ENCODE measurements at regions of chr15 and their contacts with region 1.

Region 1: GRCh38 chr15:60507596-60508424 is 28.9 kb upstream of the ICE2 start:
- DNase-seq: peak in 8 of 9 experiments; percentile 18 to 89 (median 52)
- ATAC-seq: peak; percentile 83
- H3K4me3 ChIP-seq: no peak overlapping the region
- H3K4me3 Mint-ChIP-seq: no peak overlapping the region
- H3K27ac ChIP-seq: peak overlapping the region in 1 of 2 experiments; percentile 52
- H3K27ac Mint-ChIP-seq: peak overlapping the region; percentile 47
- H3K4me1 ChIP-seq: peaks cover 33% of the 10 kb centered on the region
- H3K4me1 Mint-ChIP-seq: peaks cover 52% of the 10 kb centered on the region
- H3K27me3 ChIP-seq: no peaks in the 10 kb centered on the region
- H3K27me3 Mint-ChIP-seq: no peaks in the 10 kb centered on the region
- CTCF ChIP-seq: peak; percentile 86

Region 2: GRCh38 chr15:60362321-60363086 is 145.3 kb before region 1 on chr15:
- CTCF ChIA-PET with region 1: interaction called, 8 read pairs
- POLR2A ChIA-PET with region 1: no interaction called
- intact Hi-C with region 1: loop called (anchors 5 kb)
- DNase-seq: peak in 1 of 9 experiments; percentile 7
- ATAC-seq: peak; percentile 61
- H3K4me3 ChIP-seq: no peak overlapping the region
- H3K4me3 Mint-ChIP-seq: no peak overlapping the region
- H3K27ac ChIP-seq: peak overlapping the region in 1 of 2 experiments; percentile 16
- H3K27ac Mint-ChIP-seq: no peak overlapping the region
- H3K4me1 ChIP-seq: no peaks in the 10 kb centered on the region
- H3K4me1 Mint-ChIP-seq: peaks cover 5% of the 10 kb centered on the region
- H3K27me3 ChIP-seq: no peaks in the 10 kb centered on the region
- H3K27me3 Mint-ChIP-seq: no peaks in the 10 kb centered on the region
- CTCF ChIP-seq: no peak

Region 3: DNA sequence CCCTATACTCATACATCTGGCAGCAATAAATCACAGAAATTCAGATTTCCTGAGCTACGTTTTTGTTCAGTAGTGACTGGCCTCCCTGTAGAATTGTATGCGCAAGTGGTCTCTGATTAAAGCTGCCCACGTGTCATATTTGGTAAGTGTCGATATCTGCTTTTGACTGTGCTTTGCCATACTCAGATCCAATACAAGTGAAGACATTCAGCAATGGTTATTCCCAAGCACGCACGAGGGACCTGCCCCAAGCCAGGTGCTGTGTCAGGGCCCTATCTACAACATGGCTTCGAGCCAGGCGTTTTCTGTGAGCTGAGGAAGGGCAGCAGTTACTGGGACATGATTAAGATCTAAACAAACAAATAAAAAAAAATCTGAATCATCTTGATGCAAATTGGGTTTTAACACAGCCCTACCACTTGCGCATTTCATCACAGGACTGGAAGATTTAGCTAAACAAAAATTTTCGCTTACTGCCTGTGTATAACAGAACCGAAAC is 18.4 kb after region 1 on chr15:
- CTCF ChIA-PET with region 1: interaction called, 101 read pairs
- POLR2A ChIA-PET with region 1: interaction called, 3 read pairs
- intact Hi-C with region 1: loop called in 1 of 2 experiments (anchors 2 kb)
- DNase-seq: peak in 4 of 9 experiments; percentile 33 to 76 (median 60)
- ATAC-seq: peak; percentile 55
- H3K4me3 ChIP-seq: no peak overlapping the region
- H3K4me3 Mint-ChIP-seq: no peak overlapping the region
- H3K27ac ChIP-seq: peak overlapping the region in 1 of 2 experiments; percentile 67
- H3K27ac Mint-ChIP-seq: peak overlapping the region; percentile 94
- H3K4me1 ChIP-seq: peaks cover 28% of the 10 kb centered on the region
- H3K4me1 Mint-ChIP-seq: peaks cover 76% of the 10 kb centered on the region
- H3K27me3 ChIP-seq: no peaks in the 10 kb centered on the region
- H3K27me3 Mint-ChIP-seq: no peaks in the 10 kb centered on the region
- CTCF ChIP-seq: no peak

Region 4: GRCh38 chr15:60548101-60548500 is 40.3 kb after region 1 on chr15:
- CTCF ChIA-PET with region 1: interaction called, 3 read pairs
- POLR2A ChIA-PET with region 1: interaction called, 3 read pairs
- intact Hi-C with region 1: loop called in 1 of 2 experiments (anchors 5 kb)
- DNase-seq: peak in 5 of 9 experiments; percentile 38 to 71 (median 48)
- ATAC-seq: peak; percentile 67
- H3K4me3 ChIP-seq: peak overlapping the region in 1 of 2 experiments; percentile 0
- H3K4me3 Mint-ChIP-seq: peak overlapping the region; percentile 57
- H3K27ac ChIP-seq: peak overlapping the region in 1 of 2 experiments; percentile 84
- H3K27ac Mint-ChIP-seq: peak overlapping the region; percentile 89
- H3K4me1 ChIP-seq: peaks cover 90% of the 10 kb centered on the region
- H3K4me1 Mint-ChIP-seq: peaks cover 92% of the 10 kb centered on the region
- H3K27me3 ChIP-seq: no peaks in the 10 kb centered on the region
- H3K27me3 Mint-ChIP-seq: no peaks in the 10 kb centered on the region
- CTCF ChIP-seq: no peak

Region 5: GRCh38 chr15:60859996-60860494 is 352.2 kb after region 1 on chr15:
- CTCF ChIA-PET with region 1: interaction called, 31 read pairs
- POLR2A ChIA-PET with region 1: no interaction called
- intact Hi-C with region 1: loop called (anchors 1 to 2 kb)
- DNase-seq: peak in 2 of 9 experiments; percentile 31 to 53
- ATAC-seq: no peak
- H3K4me3 ChIP-seq: no peak overlapping the region
- H3K4me3 Mint-ChIP-seq: no peak overlapping the region
- H3K27ac ChIP-seq: no peak overlapping the region
- H3K27ac Mint-ChIP-seq: no peak overlapping the region
- H3K4me1 ChIP-seq: peaks cover 11% of the 10 kb centered on the region
- H3K4me1 Mint-ChIP-seq: peaks cover 35% of the 10 kb centered on the region
- H3K27me3 ChIP-seq: no peaks in the 10 kb centered on the region
- H3K27me3 Mint-ChIP-seq: no peaks in the 10 kb centered on the region
- CTCF ChIP-seq: no peak

Region 6: DNA sequence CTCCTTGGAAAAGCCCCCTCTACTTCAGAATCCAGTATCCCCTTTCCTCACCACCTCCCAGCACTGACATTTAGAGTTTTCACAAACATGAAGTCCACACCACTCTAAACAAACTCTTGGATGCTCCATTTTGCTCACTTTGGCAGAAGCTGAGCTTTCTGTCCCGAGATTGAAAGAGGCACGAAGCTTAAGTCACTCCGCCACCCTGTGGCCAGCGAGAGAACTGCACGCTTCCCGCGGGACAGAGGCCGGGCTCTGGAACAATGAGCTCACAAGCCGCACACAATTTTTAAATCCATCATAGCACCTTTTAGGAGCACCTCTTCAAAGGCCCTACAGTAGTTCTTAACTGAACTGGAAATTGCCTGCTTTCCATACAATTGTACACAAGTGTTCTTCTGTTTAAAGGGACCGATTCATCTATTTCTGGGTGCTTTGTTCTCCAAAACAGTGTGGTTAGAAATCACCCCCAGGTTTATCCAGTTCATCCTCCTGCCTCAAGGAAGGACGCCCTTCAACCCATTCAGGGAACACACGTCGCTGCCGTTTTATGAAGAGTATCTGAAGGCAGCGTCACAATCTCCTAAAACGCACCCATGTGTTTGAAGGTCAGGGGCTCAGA is 1326.4 kb after region 1 on chr15:
- CTCF ChIA-PET with region 1: no interaction called
- POLR2A ChIA-PET with region 1: no interaction called
- intact Hi-C with region 1: loop called in 1 of 2 experiments (anchors 1 kb)
- DNase-seq: peak; percentile 39 to 78 (median 71)
- ATAC-seq: peak; percentile 85
- H3K4me3 ChIP-seq: no peak overlapping the region
- H3K4me3 Mint-ChIP-seq: no peak overlapping the region
- H3K27ac ChIP-seq: no peak overlapping the region
- H3K27ac Mint-ChIP-seq: no peak overlapping the region
- H3K4me1 ChIP-seq: no peaks in the 10 kb centered on the region
- H3K4me1 Mint-ChIP-seq: peaks cover 8% of the 10 kb centered on the region
- H3K27me3 ChIP-seq: peaks cover 0 to 4% of the 10 kb centered on the region in 2 experiments
- H3K27me3 Mint-ChIP-seq: peaks cover 22% of the 10 kb centered on the region
- CTCF ChIP-seq: peak; percentile 90